ENCODE measurements at regions of chr3 and their contacts with region 1.

Region 1: GRCh38 chr3:150495563-150496168 is 50.6 kb downstream of the SERP1 start:
- DNase-seq: no peak
- H3K4me3 ChIP-seq: no peak overlapping the region
- CTCF ChIP-seq: no peak
- POLR2A ChIP-seq: no peak

Region 2: GRCh38 chr3:149969940-149970715 is 525.5 kb before region 1 on chr3:
- intact Hi-C with region 1: loop called (anchors 5 kb)
- DNase-seq: peak; percentile 49 to 93
- H3K4me3 ChIP-seq: peak overlapping the region; percentile 56
- CTCF ChIP-seq: no peak
- POLR2A ChIP-seq: no peak

Region 3: DNA sequence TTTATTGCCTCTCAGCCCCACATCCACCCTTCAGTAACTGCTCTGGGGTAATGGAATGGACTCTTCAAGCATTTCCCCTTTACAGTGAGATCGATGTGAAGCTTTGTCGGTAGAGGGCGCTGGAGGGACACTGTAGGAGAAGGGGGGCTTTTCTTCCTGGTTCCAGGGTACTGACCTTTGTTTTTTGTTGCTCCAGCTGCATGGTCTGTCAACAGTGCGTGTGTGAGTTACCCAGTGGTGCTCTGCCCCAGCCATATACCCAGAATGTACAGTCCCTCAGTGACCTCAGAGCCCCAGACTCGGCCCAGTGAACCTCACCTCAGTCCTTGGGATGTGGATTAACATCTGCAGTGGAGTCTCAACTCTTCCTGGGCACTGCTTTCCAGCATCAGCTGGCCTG is 267.8 kb before region 1 on chr3:
- intact Hi-C with region 1: loop called (anchors 10 kb)
- DNase-seq: peak in 1 of 2 donors; percentile 79
- H3K4me3 ChIP-seq: no peak overlapping the region
- CTCF ChIP-seq: no peak
- POLR2A ChIP-seq: no peak

Region 4: DNA sequence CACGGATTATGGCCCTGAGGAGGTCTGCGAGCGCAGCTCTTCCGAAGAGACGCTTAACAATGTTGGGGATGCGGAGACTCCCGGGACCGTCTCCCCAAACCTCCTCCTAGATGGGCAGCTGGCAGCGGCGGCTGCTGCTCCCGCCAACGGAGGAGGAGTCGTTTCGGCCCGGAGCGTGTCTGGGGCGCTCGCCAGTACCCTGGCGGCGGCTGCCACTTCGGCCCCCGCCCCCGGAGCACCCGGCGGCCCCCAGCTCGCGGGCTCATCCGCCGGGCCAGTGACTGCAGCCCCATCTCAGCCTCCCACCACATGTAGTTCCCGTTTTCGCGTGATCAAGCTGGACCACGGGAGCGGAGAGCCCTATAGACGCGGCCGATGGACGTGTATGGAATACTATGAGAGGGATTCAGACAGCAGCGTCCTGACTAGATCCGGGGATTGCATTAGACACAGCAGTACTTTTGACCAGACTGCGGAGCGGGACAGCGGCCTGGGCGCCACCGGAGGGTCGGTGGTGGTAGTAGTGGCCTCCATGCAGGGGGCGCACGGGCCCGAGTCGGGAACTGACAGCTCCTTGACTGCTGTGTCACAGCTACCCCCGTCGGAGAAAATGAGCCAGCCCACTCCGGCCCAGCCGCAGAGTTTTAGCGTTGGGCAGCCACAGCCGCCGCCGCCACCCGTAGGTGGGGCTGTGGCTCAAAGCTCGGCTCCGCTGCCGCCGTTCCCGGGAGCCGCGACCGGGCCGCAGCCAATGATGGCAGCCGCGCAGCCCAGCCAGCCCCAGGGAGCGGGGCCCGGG is 86.0 kb before region 1 on chr3:
- intact Hi-C with region 1: loop called (anchors 10 kb)
- DNase-seq: peak; percentile 68 to 95
- H3K4me3 ChIP-seq: peak overlapping the region; percentile 90
- CTCF ChIP-seq: peak in 1 of 3 donors; percentile 73
- POLR2A ChIP-seq: no peak

Measured in lower leg skin (tissue), 4 donors.